Aorta (tissue), 5 donors: ENCODE measurements at regions of chr11 and their contacts with region 1.

Region 1: GRCh38 chr11:107689317-107690202 is 22.3 kb downstream of the SLN start:
- DNase-seq: peak; percentile 67 to 75
- ATAC-seq: peak; percentile 89
- H3K4me3 ChIP-seq: peak overlapping the region in 1 of 2 donors; percentile 47
- H3K27ac ChIP-seq: no peak overlapping the region
- H3K4me1 ChIP-seq: peaks cover 0 to 2% of the 10 kb centered on the region in 2 donors
- H3K27me3 ChIP-seq: no peaks in the 10 kb centered on the region

Region 2: DNA sequence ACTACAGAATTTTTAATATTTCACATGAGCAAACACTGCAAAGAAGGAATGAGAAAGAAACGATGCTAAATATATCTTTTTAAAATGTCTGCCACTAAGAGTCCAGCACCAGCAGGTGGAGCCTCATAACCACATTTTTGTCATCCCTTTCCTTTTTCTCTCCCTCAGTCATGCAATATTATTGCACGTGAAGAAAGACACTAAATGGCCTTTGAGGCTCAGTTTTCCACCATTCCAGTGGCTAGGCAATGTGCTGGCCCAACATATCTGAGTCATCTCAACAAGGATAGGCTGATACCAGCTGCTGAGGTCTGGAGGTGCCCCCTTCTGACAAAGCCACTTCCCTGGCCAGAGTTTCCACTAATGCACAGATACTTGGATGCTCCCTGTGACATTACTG is 125.9 kb before region 1 on chr11:
- intact Hi-C with region 1: loop called in 1 of 2 experiments (anchors 5 kb)
- DNase-seq: no peak
- ATAC-seq: peak; percentile 58
- H3K4me3 ChIP-seq: no peak overlapping the region
- H3K27ac ChIP-seq: no peak overlapping the region
- H3K4me1 ChIP-seq: peaks cover 0 to 3% of the 10 kb centered on the region in 2 donors
- H3K27me3 ChIP-seq: no peaks in the 10 kb centered on the region

Region 3: DNA sequence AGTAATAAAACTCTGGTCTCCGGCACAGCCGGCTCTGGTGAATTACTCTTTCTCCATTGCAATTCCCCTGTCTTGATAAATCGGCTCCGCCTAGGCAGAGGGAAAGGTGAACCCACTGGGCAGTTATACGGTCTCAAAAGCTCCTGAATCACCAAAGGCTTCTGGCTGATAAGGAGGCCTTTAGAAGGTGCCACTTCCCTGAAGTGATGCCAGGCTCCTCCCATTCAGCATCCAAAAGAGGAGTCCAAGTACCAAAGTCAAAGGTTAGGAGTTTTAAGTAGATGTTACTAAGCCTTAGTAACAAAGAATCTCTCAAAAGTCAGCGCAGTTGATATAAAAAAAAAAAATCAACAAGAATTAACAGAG is 112.2 kb before region 1 on chr11:
- intact Hi-C with region 1: loop called (anchors 2 to 5 kb)
- DNase-seq: no peak
- ATAC-seq: no peak
- H3K4me3 ChIP-seq: no peak overlapping the region
- H3K27ac ChIP-seq: no peak overlapping the region
- H3K4me1 ChIP-seq: no peaks in the 10 kb centered on the region
- H3K27me3 ChIP-seq: no peaks in the 10 kb centered on the region